PC-9 (cell line): ENCODE measurements at regions of chr11 and their contacts with region 1.

Region 1: DNA sequence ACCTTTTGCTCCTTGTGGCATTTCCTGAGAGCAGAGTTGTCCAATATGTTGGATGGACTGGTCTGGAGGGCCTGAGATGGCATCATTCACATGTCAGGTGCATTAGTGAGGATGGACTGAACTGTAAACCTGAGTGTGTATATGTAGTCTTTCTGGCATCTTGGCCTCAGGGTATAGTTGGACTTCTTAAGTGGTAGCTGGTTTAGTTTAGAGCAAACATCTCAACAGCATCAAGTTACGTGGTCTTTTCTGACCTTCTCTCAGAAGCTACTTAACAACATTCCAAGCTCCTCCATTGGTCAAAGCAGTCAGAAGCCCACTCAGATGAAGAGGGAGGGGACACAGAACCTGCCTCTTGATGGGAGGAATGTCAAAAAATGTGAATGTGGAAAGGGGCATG is 829.9 kb downstream of the METTL15 start:
- DNase-seq: peak; percentile 35 to 46
- H3K4me3 ChIP-seq: no peak overlapping the region
- H3K27ac ChIP-seq: no peak overlapping the region
- H3K4me1 ChIP-seq: peaks cover 6% of the 10 kb centered on the region
- H3K27me3 ChIP-seq: no peaks in the 10 kb centered on the region
- CTCF ChIP-seq: no peak

Region 2: GRCh38 chr11:28794405-28794804 is 143.7 kb before region 1 on chr11:
- CTCF ChIA-PET with region 1: no interaction called
- POLR2A ChIA-PET with region 1: interaction called, 12 read pairs
- intact Hi-C with region 1: no loop called
- DNase-seq: no peak
- H3K4me3 ChIP-seq: no peak overlapping the region
- H3K27ac ChIP-seq: no peak overlapping the region
- H3K4me1 ChIP-seq: no peaks in the 10 kb centered on the region
- H3K27me3 ChIP-seq: no peaks in the 10 kb centered on the region
- CTCF ChIP-seq: no peak